ENCODE measurements at regions of chr16 and their contacts with region 1.

Region 1: GRCh38 chr16:56608043-56608875 is at the start of gene MT2A:
- DNase-seq: peak; percentile 94
- ATAC-seq: peak; percentile 76
- H3K4me3 ChIP-seq: peak within 1 kb of the TSS; percentile 75 to 84 (median 78)
- H3K27ac ChIP-seq: peak within 1 kb of the TSS; percentile 93
- H3K4me1 ChIP-seq: peaks cover 72% of the 10 kb centered on the region
- H3K27me3 ChIP-seq: no peaks in the 10 kb centered on the region; a peak in 1 of 5 replicates
- CTCF ChIP-seq: peak; percentile 23
- EP300 ChIP-seq: peak in 1 of 2 experiments; percentile 22; a peak in 2 of 4 replicates
- POLR2A ChIP-seq: peak; percentile 87 to 89
- RAD21 ChIP-seq: peak; percentile 73
- total RNA-seq, gene MT2A: 371 and 409 TPM in 2 replicates

Region 2: GRCh38 chr16:56558024-56558747 is 50.1 kb before region 1 on chr16:
- CTCF ChIA-PET with region 1: no interaction called
- POLR2A ChIA-PET with region 1: no interaction called
- in situ Hi-C with region 1: no loop called
- intact Hi-C with region 1: no loop called
- DNase-seq: no peak
- ATAC-seq: peak; percentile 23; the same call in 2 of the 3 replicates
- H3K4me3 ChIP-seq: no peak overlapping the region
- H3K27ac ChIP-seq: no peak overlapping the region
- H3K4me1 ChIP-seq: peaks cover 45% of the 10 kb centered on the region
- H3K27me3 ChIP-seq: peaks cover 3 to 25% of the 10 kb centered on the region in 2 experiments; a peak in 4 of 5 replicates
- CTCF ChIP-seq: no peak
- EP300 ChIP-seq: no peak
- POLR2A ChIP-seq: no peak
- RAD21 ChIP-seq: no peak

Region 3: DNA sequence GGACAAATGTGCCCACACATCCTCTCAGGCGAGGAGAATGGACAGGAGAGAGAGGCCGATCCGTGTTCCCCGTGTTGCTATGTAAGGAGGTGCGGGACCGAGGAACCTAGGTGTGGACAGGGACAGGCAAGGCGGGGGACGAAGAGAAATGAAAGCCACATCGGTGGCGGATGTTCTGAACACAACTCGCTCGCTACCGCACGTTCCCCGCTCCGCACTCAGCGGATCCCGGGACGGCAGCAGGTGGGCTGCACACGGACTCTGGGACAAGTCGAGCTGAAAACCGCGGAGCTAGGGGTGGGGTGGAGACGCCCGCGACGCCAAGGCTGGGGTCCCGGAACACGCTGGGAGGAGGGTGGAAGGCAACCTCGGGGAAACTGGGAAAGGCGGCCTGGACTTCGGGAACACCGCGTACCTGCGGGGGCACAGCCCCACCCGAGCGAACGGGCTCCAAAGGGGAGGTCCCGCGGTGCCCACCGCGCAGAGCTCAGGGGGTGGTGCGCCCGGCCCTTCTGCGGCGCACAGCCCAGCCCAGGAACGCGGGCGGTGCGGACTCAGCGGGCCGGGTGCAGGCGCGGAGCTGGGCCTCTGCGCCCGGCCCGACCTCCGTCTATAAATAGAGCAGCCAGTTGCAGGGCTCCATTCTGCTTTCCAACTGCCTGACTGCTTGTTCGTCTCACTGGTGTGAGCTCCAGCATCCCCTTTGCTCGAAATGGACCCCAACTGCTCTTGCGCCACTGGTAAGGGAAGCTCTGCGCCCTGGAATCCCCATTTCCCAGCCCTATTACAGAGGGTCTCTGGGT is 17.1 kb after region 1 on chr16 and contains the start of gene MT1E:
- CTCF ChIA-PET with region 1: no interaction called
- POLR2A ChIA-PET with region 1: interaction called, 83 read pairs
- in situ Hi-C with region 1: no loop called
- intact Hi-C with region 1: loop called (anchors 2 kb)
- DNase-seq: peak; percentile 63
- ATAC-seq: peak; percentile 92
- H3K4me3 ChIP-seq: peak within 1 kb of the TSS; percentile 63 to 88 (median 72)
- H3K27ac ChIP-seq: no peak within 1 kb of the TSS
- H3K4me1 ChIP-seq: peaks cover 60% of the 10 kb centered on the region
- H3K27me3 ChIP-seq: peaks cover 0 to 34% of the 10 kb centered on the region in 2 experiments; a peak in 3 of 5 replicates
- CTCF ChIP-seq: no peak
- EP300 ChIP-seq: no peak
- POLR2A ChIP-seq: peak; percentile 94 to 99
- RAD21 ChIP-seq: peak; percentile 52; the same call in 1 of the 2 replicates
- total RNA-seq, gene MT1E: 1,072 and 1,398 TPM in 2 replicates

Region 4: GRCh38 chr16:56657555-56658326 is 49.5 kb after region 1 on chr16 and contains the start of gene MT1F:
- CTCF ChIA-PET with region 1: no interaction called
- POLR2A ChIA-PET with region 1: interaction called, 5 read pairs
- in situ Hi-C with region 1: no loop called
- intact Hi-C with region 1: loop called (anchors 10 kb)
- DNase-seq: peak; percentile 85
- ATAC-seq: peak; percentile 92
- H3K4me3 ChIP-seq: peak within 1 kb of the TSS; percentile 77 to 82 (median 78)
- H3K27ac ChIP-seq: no peak within 1 kb of the TSS
- H3K4me1 ChIP-seq: peaks cover 20% of the 10 kb centered on the region
- H3K27me3 ChIP-seq: peaks cover under 1 to 4% of the 10 kb centered on the region in 2 experiments; a peak in 2 of 5 replicates
- CTCF ChIP-seq: peak; percentile 45
- EP300 ChIP-seq: no peak
- POLR2A ChIP-seq: peak; percentile 38 to 75
- RAD21 ChIP-seq: no peak
- total RNA-seq, gene MT1F: 169 and 211 TPM in 2 replicates

Region 5: GRCh38 chr16:56681939-56682702 is 73.9 kb after region 1 on chr16 and contains the start of gene MT1X:
- CTCF ChIA-PET with region 1: no interaction called
- POLR2A ChIA-PET with region 1: interaction called, 15 read pairs
- in situ Hi-C with region 1: no loop called
- intact Hi-C with region 1: no loop called
- DNase-seq: peak; percentile 87
- ATAC-seq: peak; percentile 96
- H3K4me3 ChIP-seq: peak within 1 kb of the TSS; percentile 62 to 83 (median 78); a peak in 5 of 6 replicates
- H3K27ac ChIP-seq: no peak within 1 kb of the TSS
- H3K4me1 ChIP-seq: peaks cover 45% of the 10 kb centered on the region
- H3K27me3 ChIP-seq: peaks cover 0 to 10% of the 10 kb centered on the region in 2 experiments; a peak in 1 of 5 replicates
- CTCF ChIP-seq: no peak
- EP300 ChIP-seq: peak in 1 of 2 experiments; percentile 45; a peak in 1 of 4 replicates
- POLR2A ChIP-seq: peak; percentile 96
- RAD21 ChIP-seq: no peak
- total RNA-seq, gene MT1X: 288 and 327 TPM in 2 replicates

Region 6: DNA sequence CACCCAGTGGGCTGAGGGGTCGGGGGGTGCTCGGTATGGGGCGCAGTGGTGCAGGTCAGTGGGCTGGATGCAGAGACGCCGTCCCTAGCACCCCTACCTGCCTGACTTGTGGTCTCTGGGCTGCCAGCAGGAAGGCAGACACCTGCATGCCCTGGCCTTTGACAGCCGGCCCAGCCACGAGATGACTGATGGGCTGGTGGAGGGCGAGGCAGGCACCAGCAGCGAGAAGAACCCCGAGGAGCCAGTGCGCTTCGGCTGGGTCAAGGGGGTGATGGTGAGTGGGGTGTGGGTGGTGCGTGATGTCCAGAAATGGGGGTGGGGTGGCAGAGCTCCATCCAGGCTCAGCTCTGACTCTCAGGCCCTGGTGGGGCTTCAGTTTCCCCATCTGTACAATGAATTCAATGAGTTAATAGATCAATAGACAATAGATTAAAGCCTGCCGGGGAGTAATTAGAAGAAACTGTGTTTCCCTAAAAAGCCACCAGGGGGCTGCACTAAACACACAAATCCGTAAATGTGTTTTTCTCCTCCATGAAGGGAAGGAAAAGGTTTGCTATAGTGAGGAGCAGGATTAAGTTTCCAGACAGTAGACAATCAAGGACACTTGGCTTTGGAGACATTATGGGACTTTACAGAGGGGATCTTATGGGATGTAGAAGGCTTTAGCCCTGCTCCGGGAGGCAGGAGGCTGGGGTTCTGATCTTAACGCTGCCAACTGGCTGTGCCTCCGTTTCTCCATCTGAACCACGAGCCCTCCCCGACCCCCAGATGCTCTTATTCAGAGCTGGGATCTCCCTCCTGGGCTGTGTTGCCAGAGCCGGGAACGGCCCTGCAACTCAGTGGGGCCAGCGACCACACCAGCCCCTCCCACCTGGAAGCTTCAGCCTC is 258.9 kb after region 1 on chr16:
- CTCF ChIA-PET with region 1: no interaction called
- POLR2A ChIA-PET with region 1: no interaction called
- in situ Hi-C with region 1: no loop called
- intact Hi-C with region 1: loop called (anchors 10 kb)
- DNase-seq: peak; percentile 70
- ATAC-seq: peak; percentile 6; the same call in 1 of the 3 replicates
- H3K4me3 ChIP-seq: peak overlapping the region in 2 of 3 experiments; percentile 29 to 50; a peak in 4 of 6 replicates
- H3K27ac ChIP-seq: no peak overlapping the region
- H3K4me1 ChIP-seq: peaks cover 56% of the 10 kb centered on the region
- H3K27me3 ChIP-seq: no peaks in the 10 kb centered on the region
- CTCF ChIP-seq: peak; percentile 74
- EP300 ChIP-seq: no peak
- POLR2A ChIP-seq: no peak
- RAD21 ChIP-seq: peak; percentile 59